Spleen (tissue), 13 donors: ENCODE measurements at regions of chr12 and their contacts with region 1.

Region 1: DNA sequence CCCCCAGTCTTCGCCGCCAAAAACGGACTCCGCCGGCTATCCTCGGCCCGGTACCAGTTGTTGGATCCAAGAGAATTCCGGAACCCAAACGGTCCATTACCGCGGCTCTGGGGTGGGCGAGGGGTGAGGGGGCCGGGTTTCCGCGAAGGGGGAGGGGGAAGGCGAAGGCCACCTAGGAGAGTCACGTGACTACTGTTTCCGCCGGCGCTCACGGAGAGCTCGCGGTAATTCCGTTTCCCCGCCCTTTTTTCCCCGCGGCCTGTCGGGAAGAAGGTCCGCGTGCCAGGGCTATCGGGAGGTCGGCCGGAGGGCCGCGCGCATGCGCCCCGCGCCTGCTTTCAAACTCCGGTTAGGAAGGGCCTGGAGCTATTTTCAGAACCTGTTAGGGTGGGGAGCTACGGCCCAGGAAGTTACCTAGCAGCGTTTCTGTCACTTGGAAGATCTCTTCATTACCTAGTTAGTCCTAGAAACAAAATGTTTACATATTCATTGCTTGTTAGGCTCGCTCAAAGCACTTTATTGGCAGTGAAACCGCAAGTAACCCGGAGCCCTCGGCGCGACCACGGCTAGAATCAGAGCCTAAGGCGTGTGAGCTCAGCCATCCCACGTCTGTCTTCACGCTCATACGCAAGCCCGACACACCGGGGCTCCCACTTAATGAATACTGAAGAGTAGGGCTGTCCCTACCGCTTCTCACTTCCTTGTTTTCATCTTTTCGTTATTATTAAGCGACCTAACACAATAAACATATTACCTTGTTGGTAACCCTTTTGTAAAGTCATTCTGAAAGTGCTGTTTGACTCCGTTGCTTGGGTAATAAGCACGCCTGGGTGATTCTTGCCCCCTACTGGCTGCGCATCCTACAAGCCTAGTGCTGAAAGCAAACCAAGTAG is 624 bp upstream of the SBNO1 start:
- DNase-seq: peak; percentile 99
- H3K4me3 ChIP-seq: peak overlapping the region; percentile 75 to 98 (median 92)
- H3K27ac ChIP-seq: peak overlapping the region; percentile 87 to 97 (median 94)
- H3K4me1 ChIP-seq: peaks cover 19 to 49% (median 39%) of the 10 kb centered on the region in 6 donors
- H3K27me3 ChIP-seq: no peaks in the 10 kb centered on the region
- CTCF ChIP-seq: peak; percentile 57 to 90 (median 80)
- POLR2A ChIP-seq: peak in 2 of 3 donors; percentile 25 to 64

Region 2: GRCh38 chr12:122767691-122768090 is 597.6 kb before region 1 on chr12:
- intact Hi-C with region 1: no loop called
- DNase-seq: no peak
- H3K4me3 ChIP-seq: no peak overlapping the region
- H3K27ac ChIP-seq: no peak overlapping the region
- H3K4me1 ChIP-seq: no peaks in the 10 kb centered on the region
- H3K27me3 ChIP-seq: no peaks in the 10 kb centered on the region
- CTCF ChIP-seq: no peak
- POLR2A ChIP-seq: no peak

Region 3: DNA sequence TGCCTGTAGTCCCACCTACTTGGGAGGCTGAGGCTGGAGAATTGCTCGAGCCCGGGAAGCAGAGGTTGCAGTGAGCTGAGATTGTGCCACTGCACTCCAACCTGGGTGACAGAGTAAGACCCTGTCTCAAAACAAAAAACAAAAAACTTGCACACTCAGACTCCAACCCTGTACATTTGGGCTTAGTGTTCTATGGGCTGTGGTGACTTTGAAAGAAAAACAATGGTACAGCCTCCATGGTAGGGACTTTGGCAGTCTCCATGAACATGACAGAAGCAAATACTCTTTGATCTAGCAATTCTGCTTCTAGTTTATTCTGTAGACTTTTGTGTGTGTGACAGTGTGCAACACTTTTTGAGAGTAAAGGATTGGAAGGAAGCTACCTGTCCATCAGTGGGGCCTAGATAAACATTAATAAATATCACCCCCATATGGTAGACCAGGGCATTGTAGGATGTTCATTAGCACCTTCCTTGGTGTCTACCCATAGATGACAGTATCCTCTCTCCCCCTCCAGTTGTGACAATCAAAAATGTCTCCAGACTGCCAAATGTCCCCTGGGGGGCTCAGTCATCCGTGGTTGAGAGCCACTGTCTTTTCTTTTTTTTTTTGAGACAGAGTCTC is 103.4 kb after region 1 on chr12:
- intact Hi-C with region 1: loop called (anchors 10 kb)
- DNase-seq: no peak
- H3K4me3 ChIP-seq: no peak overlapping the region
- H3K27ac ChIP-seq: no peak overlapping the region
- H3K4me1 ChIP-seq: peaks cover 0 to 41% (median 4%) of the 10 kb centered on the region in 6 donors
- H3K27me3 ChIP-seq: no peaks in the 10 kb centered on the region
- CTCF ChIP-seq: peak in 9 of 11 experiments; percentile 28 to 54 (median 42)
- POLR2A ChIP-seq: no peak